OCI-LY7 (cell line): ENCODE measurements at regions of chrX and their contacts with region 1.

Region 1: DNA sequence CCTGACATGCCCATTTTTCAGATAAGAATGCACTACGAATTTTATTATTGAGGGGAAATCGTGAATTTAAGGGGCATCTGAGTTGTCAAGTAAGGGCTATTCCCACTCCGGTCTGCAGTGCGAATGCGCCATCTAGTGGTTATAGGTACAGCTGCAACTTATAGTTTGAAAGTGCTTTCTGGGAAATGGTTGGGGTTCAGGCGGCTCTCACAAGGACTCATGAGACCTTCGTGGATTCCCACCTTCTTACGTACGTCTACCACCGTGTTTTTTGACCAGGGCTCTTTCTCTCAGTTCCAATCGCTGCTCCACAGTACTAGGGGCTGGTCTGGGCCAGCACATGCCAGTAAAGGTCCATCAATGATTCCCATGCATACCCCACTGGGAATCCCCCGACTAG is 12.3 kb downstream of the MSL3 start:
- DNase-seq: peak; percentile 64
- H3K4me3 ChIP-seq: no peak overlapping the region
- H3K27ac ChIP-seq: no peak overlapping the region
- H3K4me1 ChIP-seq: peaks cover 3% of the 10 kb centered on the region
- CTCF ChIP-seq: peak; percentile 80

Region 2: GRCh38 chrX:11724122-11725017 is 46.0 kb before region 1 on chrX:
- CTCF ChIA-PET with region 1: no interaction called
- POLR2A ChIA-PET with region 1: no interaction called
- intact Hi-C with region 1: loop called (anchors 5 kb)
- DNase-seq: peak; percentile 29
- H3K4me3 ChIP-seq: no peak overlapping the region
- H3K27ac ChIP-seq: no peak overlapping the region
- H3K4me1 ChIP-seq: no peaks in the 10 kb centered on the region
- CTCF ChIP-seq: peak; percentile 82